ENCODE measurements at regions of chr6 and their contacts with region 1.

Region 1: GRCh38 chr6:6057424-6058053 is 50.8 kb upstream of the NRN1 start:
- DNase-seq: no peak
- H3K4me3 ChIP-seq: no peak overlapping the region
- H3K27ac ChIP-seq: no peak overlapping the region
- H3K4me1 ChIP-seq: no peaks in the 10 kb centered on the region
- H3K27me3 ChIP-seq: peaks cover 17% of the 10 kb centered on the region
- CTCF ChIP-seq: peak; percentile 41 to 53 (median 47)
- EP300 ChIP-seq: no peak
- POLR2A ChIP-seq: no peak

Region 2: GRCh38 chr6:6152060-6152459 is 94.5 kb after region 1 on chr6:
- in situ Hi-C with region 1: no loop called
- intact Hi-C with region 1: no loop called
- DNase-seq: no peak
- H3K4me3 ChIP-seq: no peak overlapping the region
- H3K27ac ChIP-seq: no peak overlapping the region
- H3K4me1 ChIP-seq: no peaks in the 10 kb centered on the region
- H3K27me3 ChIP-seq: no peaks in the 10 kb centered on the region
- CTCF ChIP-seq: no peak
- EP300 ChIP-seq: no peak
- POLR2A ChIP-seq: no peak

Region 3: GRCh38 chr6:6547110-6547879 is 489.8 kb after region 1 on chr6:
- in situ Hi-C with region 1: loop called in 3 of 4 experiments (anchors 25 kb)
- intact Hi-C with region 1: loop called (anchors 5 kb)
- DNase-seq: peak; percentile 85
- H3K4me3 ChIP-seq: peak overlapping the region in 3 of 4 donors; percentile 7 to 44 (median 30)
- H3K27ac ChIP-seq: no peak overlapping the region
- H3K4me1 ChIP-seq: peaks cover 10 to 12% (median 11%) of the 10 kb centered on the region in 4 donors
- H3K27me3 ChIP-seq: peaks cover 38% of the 10 kb centered on the region
- CTCF ChIP-seq: peak; percentile 89 to 92 (median 91)
- EP300 ChIP-seq: no peak
- POLR2A ChIP-seq: no peak